Activated CD8-positive, alpha-beta T cell treated with anti-CD3 and anti-CD28 coated beads for 36 hours (primary cell): ENCODE measurements at regions of chr7 and their contacts with region 1.

Region 1: DNA sequence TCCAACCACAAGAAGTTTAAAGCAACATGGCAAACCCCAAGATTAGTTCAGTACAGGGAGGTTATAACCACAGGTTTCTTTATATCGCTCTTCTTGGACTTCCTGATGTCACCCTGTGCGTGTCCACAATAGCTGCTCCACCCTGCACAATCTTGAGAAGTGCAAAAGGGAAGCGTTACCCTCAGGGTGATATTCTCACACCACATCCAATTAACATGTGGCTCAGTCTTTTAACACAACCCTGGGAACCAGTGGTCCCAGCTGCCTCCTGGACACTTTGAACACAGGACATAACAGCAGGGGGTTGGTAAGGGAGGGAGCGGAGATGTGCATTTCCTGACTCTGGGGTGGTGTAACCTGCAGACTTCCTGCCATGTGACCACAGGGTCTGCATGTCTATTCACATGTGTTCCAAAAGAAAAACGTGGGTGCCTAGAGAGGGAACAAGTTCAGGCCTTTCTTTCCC is 64.6 kb downstream of the GSAP start:
- DNase-seq: peak; percentile 72
- ATAC-seq: peak; percentile 87
- H3K4me3 Mint-ChIP-seq: peak overlapping the region; percentile 39
- H3K27ac Mint-ChIP-seq: peak overlapping the region; percentile 87
- H3K4me1 Mint-ChIP-seq: peaks cover 58% of the 10 kb centered on the region
- H3K27me3 Mint-ChIP-seq: no peaks in the 10 kb centered on the region
- CTCF ChIP-seq: no peak

Region 2: DNA sequence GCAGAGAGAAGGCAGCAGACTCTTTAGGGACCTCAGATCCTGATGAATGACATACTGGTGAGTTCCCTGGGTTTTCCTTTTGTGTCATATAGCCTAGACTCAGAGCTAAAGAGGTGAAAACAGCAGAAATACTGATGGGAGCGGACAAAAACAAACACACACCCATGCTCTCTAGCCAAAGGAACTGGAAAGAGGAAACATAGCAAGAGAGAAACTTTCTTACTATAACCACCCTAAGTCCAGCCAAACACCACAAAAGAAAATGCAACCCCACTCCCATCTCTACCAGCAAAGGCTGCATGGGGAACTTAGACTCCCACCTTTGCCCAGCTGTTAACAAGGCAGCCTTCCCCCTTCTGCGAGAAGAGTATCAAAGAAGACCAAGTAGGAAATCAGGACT is 48.2 kb after region 1 on chr7:
- CTCF ChIA-PET with region 1: no interaction called
- POLR2A ChIA-PET with region 1: no interaction called
- intact Hi-C with region 1: no loop called
- DNase-seq: no peak
- ATAC-seq: no peak
- H3K4me3 Mint-ChIP-seq: no peak overlapping the region
- H3K27ac Mint-ChIP-seq: no peak overlapping the region
- H3K4me1 Mint-ChIP-seq: peaks cover 7% of the 10 kb centered on the region
- H3K27me3 Mint-ChIP-seq: no peaks in the 10 kb centered on the region
- CTCF ChIP-seq: no peak

Region 3: DNA sequence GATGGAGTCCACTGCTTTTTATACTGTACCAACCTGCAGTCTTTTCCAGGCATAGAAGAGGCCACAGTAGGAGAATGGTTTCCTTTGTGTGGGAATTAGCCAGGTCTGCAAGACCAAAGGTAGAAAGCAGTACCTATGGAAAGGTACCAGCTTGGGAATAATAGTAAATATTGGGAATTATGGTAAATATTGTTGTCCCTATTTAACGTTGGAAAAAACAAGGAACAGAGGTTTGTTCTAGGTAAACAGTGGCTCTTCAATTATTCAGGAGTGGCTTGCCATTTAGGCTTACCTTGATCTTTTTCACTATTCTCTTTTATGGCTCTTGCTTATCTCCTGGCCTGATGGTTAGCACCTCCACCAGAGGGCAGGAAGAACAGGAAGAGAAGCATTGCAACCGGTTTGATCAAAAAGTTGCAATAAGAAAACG is 108.5 kb after region 1 on chr7:
- CTCF ChIA-PET with region 1: no interaction called
- POLR2A ChIA-PET with region 1: no interaction called
- intact Hi-C with region 1: loop called (anchors 10 kb)
- DNase-seq: no peak
- ATAC-seq: no peak
- H3K4me3 Mint-ChIP-seq: no peak overlapping the region
- H3K27ac Mint-ChIP-seq: no peak overlapping the region
- H3K4me1 Mint-ChIP-seq: peaks cover 14% of the 10 kb centered on the region
- H3K27me3 Mint-ChIP-seq: no peaks in the 10 kb centered on the region
- CTCF ChIP-seq: no peak